Sigmoid colon (tissue), 7 donors: ENCODE measurements at regions of chr19 and their contacts with region 1.

Region 1: GRCh38 chr19:32041681-32042292 is 303.6 kb upstream of the ZNF507 start:
- DNase-seq: no peak
- H3K4me3 ChIP-seq: peak overlapping the region; percentile 15 to 39 (median 27)
- H3K27ac ChIP-seq: no peak overlapping the region
- H3K4me1 ChIP-seq: peaks cover 0 to 52% (median 45%) of the 10 kb centered on the region in 4 donors
- H3K27me3 ChIP-seq: peaks cover 0 to 12% (median 0%) of the 10 kb centered on the region in 3 donors
- CTCF ChIP-seq: peak; percentile 63 to 80 (median 74)
- EP300 ChIP-seq: no peak
- POLR2A ChIP-seq: no peak

Region 2: GRCh38 chr19:30682999-30683536 is 1358.7 kb before region 1 on chr19:
- intact Hi-C with region 1: loop called (anchors 2 kb)
- DNase-seq: peak; percentile 85
- H3K4me3 ChIP-seq: no peak overlapping the region
- H3K27ac ChIP-seq: no peak overlapping the region
- H3K4me1 ChIP-seq: peaks cover 0 to 12% (median 5%) of the 10 kb centered on the region in 4 donors
- H3K27me3 ChIP-seq: peaks cover 0 to 13% (median 0%) of the 10 kb centered on the region in 3 donors
- CTCF ChIP-seq: peak; percentile 59 to 86 (median 82)
- EP300 ChIP-seq: no peak
- POLR2A ChIP-seq: no peak

Region 3: DNA sequence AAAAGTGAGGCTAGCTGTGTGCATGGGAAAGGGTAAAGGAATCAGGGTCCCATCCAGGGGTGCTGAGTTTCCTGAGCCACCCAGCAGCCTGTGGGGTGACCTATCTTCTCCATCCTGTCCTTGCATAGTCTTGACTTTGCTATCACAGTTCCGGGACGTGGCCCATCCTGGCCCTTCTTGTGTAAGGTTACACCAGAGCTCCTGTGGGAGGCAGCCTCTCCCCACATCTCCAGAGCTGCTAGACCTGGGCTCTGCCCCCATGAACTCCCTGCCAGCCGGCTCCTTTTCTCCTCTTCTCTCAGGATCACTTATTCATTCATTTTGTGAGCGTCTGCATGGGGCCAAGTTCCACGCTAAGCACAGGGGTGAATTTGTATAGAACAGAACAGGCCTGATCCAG is 931.5 kb before region 1 on chr19:
- intact Hi-C with region 1: loop called (anchors 5 kb)
- DNase-seq: no peak
- H3K4me3 ChIP-seq: no peak overlapping the region
- H3K27ac ChIP-seq: peak overlapping the region in 1 of 4 donors; percentile 21
- H3K4me1 ChIP-seq: peaks cover 0 to 19% (median 8%) of the 10 kb centered on the region in 4 donors
- H3K27me3 ChIP-seq: no peaks in the 10 kb centered on the region
- CTCF ChIP-seq: peak in 2 of 4 experiments; percentile 13 to 38
- EP300 ChIP-seq: no peak
- POLR2A ChIP-seq: no peak

Region 4: GRCh38 chr19:31349160-31349881 is 692.5 kb before region 1 on chr19 and contains the start of gene TSHZ3:
- intact Hi-C with region 1: loop called (anchors 5 kb)
- DNase-seq: peak; percentile 94
- H3K4me3 ChIP-seq: peak within 1 kb of the TSS; percentile 73 to 98 (median 97)
- H3K27ac ChIP-seq: peak within 1 kb of the TSS; percentile 95 to 99 (median 99)
- H3K4me1 ChIP-seq: peaks cover 0 to 52% (median 50%) of the 10 kb centered on the region in 4 donors
- H3K27me3 ChIP-seq: no peaks in the 10 kb centered on the region
- CTCF ChIP-seq: no peak
- EP300 ChIP-seq: no peak
- POLR2A ChIP-seq: no peak
- total RNA-seq, gene TSHZ3: 16.1 to 27.7 (median 21.2) TPM

Region 5: DNA sequence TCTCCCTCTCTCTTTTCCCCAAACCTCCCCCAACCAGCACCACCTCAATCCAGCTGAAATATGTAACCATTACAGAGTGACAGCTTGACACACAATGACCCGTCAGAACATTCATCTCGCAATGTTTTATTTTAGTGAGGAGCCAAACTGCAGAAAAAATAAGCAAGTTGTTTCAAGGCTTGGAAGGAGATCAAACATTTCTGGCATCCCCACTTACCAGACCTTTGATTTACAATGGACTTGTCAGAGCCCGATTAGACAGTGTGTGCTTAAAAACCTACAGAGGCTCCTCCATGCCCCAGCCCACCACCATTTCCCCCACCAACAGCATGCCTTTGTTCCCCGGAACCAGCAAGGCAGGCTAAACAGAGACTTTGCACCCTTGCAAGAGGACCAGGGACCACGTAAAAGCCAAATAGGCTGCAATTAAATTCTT is 79.2 kb before region 1 on chr19:
- intact Hi-C with region 1: loop called (anchors 5 kb)
- DNase-seq: no peak
- H3K4me3 ChIP-seq: no peak overlapping the region
- H3K27ac ChIP-seq: peak overlapping the region in 3 of 4 donors; percentile 36 to 68 (median 52)
- H3K4me1 ChIP-seq: peaks cover 0 to 54% (median 40%) of the 10 kb centered on the region in 4 donors
- H3K27me3 ChIP-seq: no peaks in the 10 kb centered on the region
- CTCF ChIP-seq: no peak
- EP300 ChIP-seq: no peak
- POLR2A ChIP-seq: no peak

Region 6: GRCh38 chr19:32189956-32190706 is 148.3 kb after region 1 on chr19:
- intact Hi-C with region 1: no loop called
- DNase-seq: no peak
- H3K4me3 ChIP-seq: no peak overlapping the region
- H3K27ac ChIP-seq: no peak overlapping the region
- H3K4me1 ChIP-seq: no peaks in the 10 kb centered on the region
- H3K27me3 ChIP-seq: no peaks in the 10 kb centered on the region
- CTCF ChIP-seq: no peak
- EP300 ChIP-seq: no peak
- POLR2A ChIP-seq: no peak